Activated B cell treated with CpG ODN at 0.5 μM for 24 hours (primary cell): ENCODE measurements at regions of chr15 and their contacts with region 1.

Region 1: DNA sequence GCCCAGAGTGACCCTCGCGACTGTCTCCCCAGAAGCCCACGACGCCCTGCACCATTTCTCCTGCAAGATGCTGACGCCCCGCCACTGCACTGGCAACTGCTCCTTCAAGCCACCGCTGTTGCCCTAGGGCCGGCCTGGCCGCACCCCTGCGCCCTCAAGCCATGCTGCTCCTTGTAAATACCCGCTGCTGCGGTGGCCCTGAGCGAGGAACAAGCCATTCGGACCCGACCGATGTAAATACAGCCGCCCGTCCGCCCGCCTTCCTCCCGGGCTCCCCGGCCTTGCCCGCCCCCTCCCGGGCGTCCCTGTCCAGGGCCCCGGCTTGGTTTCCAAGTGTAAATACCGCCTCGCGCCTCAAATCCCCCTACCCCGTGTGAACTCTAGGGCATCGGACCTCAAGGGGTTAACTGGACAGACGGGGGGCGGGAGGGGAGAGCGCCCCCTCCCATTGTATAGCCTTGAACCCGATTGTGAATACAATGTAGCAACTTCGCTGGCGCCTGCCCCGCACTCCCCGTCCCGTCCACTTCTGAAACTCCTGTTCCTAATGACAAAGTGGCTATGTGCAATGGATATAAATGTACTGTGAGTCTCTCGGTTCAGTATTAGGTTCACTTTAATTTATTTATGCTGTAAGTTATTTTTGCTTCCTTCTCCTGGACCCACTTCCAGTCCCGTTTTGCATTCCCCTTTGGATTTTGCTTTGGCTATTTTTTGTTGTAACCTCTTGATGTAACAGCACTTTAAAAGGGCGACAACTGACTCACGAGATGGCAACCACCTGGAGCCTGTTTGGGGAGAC is 5.9 kb downstream of the RNU6-1 start:
- DNase-seq: peak; percentile 41
- ATAC-seq: peak; percentile 40
- H3K4me3 Mint-ChIP-seq: peak overlapping the region; percentile 79
- H3K27ac Mint-ChIP-seq: no peak overlapping the region
- H3K4me1 Mint-ChIP-seq: peaks cover 50% of the 10 kb centered on the region
- H3K27me3 Mint-ChIP-seq: peaks cover 54% of the 10 kb centered on the region
- CTCF ChIP-seq: no peak

Region 2: GRCh38 chr15:67456677-67457529 is 377.0 kb before region 1 on chr15:
- CTCF ChIA-PET with region 1: interaction called, 29 read pairs
- POLR2A ChIA-PET with region 1: interaction called, 3 read pairs
- intact Hi-C with region 1: loop called (anchors 1 kb)
- DNase-seq: peak; percentile 70
- ATAC-seq: peak; percentile 97
- H3K4me3 Mint-ChIP-seq: no peak overlapping the region
- H3K27ac Mint-ChIP-seq: no peak overlapping the region
- H3K4me1 Mint-ChIP-seq: no peaks in the 10 kb centered on the region
- H3K27me3 Mint-ChIP-seq: peaks cover 4% of the 10 kb centered on the region
- CTCF ChIP-seq: peak; percentile 85

Region 3: DNA sequence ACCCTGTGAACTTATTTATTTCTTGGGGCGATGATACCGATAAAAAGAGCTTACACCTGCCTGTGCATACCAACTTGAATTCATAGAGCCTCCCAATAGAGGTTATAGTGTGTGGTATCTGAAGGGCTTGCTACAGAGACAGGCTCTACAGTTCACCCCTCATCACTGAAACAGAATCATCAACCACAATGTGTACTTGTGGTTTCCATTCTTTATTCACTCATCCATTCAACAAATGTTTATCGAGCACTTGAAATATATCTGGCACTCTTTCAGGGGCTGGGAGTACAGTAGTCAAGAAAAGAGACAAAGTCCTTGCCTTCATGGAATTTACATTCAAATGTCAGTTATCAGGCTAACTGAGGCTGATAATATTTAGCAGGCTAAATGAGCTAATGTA is 143.0 kb before region 1 on chr15:
- CTCF ChIA-PET with region 1: no interaction called
- POLR2A ChIA-PET with region 1: no interaction called
- intact Hi-C with region 1: no loop called
- DNase-seq: no peak
- ATAC-seq: no peak
- H3K4me3 Mint-ChIP-seq: no peak overlapping the region
- H3K27ac Mint-ChIP-seq: no peak overlapping the region
- H3K4me1 Mint-ChIP-seq: no peaks in the 10 kb centered on the region
- H3K27me3 Mint-ChIP-seq: no peaks in the 10 kb centered on the region
- CTCF ChIP-seq: no peak

Region 4: DNA sequence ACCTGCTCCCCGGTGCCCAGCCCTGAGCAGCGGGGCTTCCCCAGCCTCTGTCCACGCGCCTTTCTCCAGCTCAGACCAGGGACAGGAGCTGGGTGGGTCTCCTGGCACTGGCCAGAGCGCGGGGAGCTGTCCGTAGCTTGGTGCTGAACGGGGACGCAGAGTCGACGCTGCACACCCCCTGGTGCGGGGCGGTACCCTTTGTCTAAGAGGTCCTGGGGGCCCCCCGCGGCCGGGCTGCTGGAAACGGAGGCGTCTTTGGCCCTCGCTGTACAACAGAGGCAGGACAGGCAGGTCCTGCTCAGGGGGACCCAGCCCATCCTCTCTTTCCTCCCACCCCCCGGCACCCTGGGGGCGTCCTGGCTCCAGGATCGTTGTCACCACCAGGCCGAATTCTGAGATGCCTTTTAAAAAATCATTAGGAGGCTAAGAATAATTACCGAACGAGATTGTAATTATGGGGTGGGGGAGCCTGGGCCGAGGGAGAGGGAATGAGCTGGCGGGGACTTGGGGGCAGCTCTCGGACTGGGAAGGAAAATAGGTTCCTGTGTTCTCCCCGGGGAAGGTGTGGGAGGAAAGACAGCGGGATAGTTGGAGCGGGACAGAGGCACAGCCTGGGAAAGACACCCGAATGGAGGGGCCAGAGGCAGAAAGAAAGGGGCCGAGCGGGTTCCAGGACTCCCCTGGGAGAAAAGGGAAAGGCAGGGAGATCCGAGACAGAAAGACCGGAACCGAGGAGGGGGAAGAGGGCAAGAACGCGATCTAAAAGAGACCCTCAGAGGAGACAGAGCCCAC is 12.7 kb before region 1 on chr15:
- CTCF ChIA-PET with region 1: interaction called, 14 read pairs
- POLR2A ChIA-PET with region 1: no interaction called
- intact Hi-C with region 1: loop called (anchors 1 kb)
- DNase-seq: no peak
- ATAC-seq: peak; percentile 53
- H3K4me3 Mint-ChIP-seq: peak overlapping the region; percentile 19
- H3K27ac Mint-ChIP-seq: peak overlapping the region; percentile 30
- H3K4me1 Mint-ChIP-seq: peaks cover 43% of the 10 kb centered on the region
- H3K27me3 Mint-ChIP-seq: peaks cover 71% of the 10 kb centered on the region
- CTCF ChIP-seq: no peak